ENCODE measurements at regions of chr5 and their contacts with region 1.

Region 1: DNA sequence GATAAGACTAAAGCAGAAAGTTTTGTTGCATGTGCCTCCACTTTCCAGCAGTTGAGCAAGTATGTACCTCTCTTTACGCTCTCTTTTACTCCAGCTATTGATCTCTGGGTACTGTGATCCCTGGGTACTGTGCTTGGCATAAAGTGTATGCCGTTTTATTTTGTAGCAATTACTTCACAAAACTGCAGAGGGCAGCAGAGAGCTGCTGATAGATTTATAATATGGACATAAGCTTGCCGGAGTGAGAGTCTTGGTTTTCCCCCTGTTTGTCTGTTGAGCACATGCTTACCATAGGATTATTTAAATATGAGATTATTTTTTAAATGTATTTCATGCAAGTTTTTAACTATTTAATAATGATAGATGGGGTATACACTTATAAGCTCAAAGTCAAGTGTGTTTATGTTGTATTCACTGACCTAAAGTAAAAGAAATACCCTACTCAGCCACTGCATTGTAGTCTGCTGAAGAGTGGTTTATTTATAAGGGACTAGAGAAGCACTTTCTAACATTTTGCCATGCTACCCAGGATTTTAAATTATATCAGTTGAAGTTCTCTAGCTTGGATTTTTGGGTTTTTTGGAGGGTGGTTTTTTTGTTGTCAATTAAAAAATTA is 13.0 kb downstream of the TTC1 start:
- DNase-seq: no peak
- ATAC-seq: peak; percentile 96
- H3K4me3 Mint-ChIP-seq: no peak overlapping the region
- H3K27ac Mint-ChIP-seq: peak overlapping the region; percentile 59
- H3K4me1 Mint-ChIP-seq: peaks cover 5% of the 10 kb centered on the region
- H3K27me3 Mint-ChIP-seq: no peaks in the 10 kb centered on the region
- CTCF ChIP-seq: no peak

Region 2: DNA sequence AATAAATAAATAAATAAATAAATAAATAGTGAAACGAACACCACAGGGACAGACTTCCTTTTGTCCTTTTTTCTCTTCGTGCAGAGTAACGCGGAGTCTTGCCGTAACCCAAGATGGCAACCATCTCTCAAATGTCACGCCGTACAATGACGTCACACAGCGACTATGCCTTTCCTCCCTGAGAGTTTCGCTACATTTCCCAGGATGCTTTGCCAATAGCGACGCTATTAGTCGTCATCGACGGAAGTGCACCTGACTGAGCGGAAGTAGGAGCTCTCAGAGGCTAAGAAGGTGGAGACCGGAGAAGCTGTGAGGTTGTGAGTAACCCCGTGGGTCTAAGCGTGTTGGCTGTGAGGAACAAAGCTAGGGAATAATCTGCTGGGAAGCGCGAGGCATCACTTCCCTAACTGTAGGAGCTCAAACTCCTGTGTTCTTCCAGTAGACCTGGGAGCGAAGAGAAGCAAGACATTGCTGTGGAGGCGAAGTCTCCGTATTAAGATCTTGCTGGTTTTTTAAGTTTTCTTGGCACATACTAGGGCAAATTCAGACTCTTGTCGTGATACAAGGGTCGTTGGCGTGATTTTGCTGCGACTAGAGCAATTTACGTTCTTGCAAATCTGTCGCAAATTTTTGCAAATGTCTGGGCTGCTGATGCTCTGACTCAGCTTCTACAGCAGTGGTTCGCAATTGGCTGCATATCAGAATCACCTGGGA is 12.9 kb before region 1 on chr5 and contains the start of gene TTC1:
- CTCF ChIA-PET with region 1: interaction called, 20 read pairs
- POLR2A ChIA-PET with region 1: interaction called, 8 read pairs
- intact Hi-C with region 1: loop called (anchors 1 kb)
- DNase-seq: peak; percentile 72
- ATAC-seq: peak; percentile 98
- H3K4me3 Mint-ChIP-seq: peak within 1 kb of the TSS; percentile 100
- H3K27ac Mint-ChIP-seq: peak within 1 kb of the TSS; percentile 98
- H3K4me1 Mint-ChIP-seq: peaks cover 31% of the 10 kb centered on the region
- H3K27me3 Mint-ChIP-seq: no peaks in the 10 kb centered on the region
- CTCF ChIP-seq: no peak
- total RNA-seq, gene TTC1: 59.9 and 65.0 TPM in 2 replicates

Region 3: DNA sequence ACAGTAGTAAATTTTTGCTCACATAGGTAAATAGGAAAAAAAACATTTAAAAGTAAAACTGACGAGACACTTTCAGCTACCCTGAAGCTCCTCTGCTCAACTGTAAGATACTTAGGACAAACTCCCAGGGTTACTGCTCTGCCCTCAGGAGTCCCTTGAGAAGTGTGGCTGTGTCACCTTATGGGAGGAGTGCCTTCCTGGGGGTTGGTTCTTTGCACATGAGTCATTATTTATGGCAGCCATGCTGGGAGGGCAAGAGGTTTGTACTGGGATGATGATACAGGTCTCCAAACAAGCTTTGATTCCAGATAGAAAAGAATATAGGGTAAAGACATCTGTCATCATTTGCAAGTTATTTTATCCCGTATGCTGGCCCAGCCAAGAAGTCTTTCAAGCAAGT is 32.9 kb after region 1 on chr5:
- CTCF ChIA-PET with region 1: no interaction called
- POLR2A ChIA-PET with region 1: interaction called, 14 read pairs
- intact Hi-C with region 1: no loop called
- DNase-seq: no peak
- ATAC-seq: no peak
- H3K4me3 Mint-ChIP-seq: no peak overlapping the region
- H3K27ac Mint-ChIP-seq: no peak overlapping the region
- H3K4me1 Mint-ChIP-seq: peaks cover 5% of the 10 kb centered on the region
- H3K27me3 Mint-ChIP-seq: no peaks in the 10 kb centered on the region
- CTCF ChIP-seq: no peak

Region 4: GRCh38 chr5:160199410-160199911 is 177.5 kb after region 1 on chr5:
- CTCF ChIA-PET with region 1: interaction called, 8 read pairs
- POLR2A ChIA-PET with region 1: no interaction called
- intact Hi-C with region 1: loop called (anchors 1 kb)
- DNase-seq: peak; percentile 78
- ATAC-seq: peak; percentile 96
- H3K4me3 Mint-ChIP-seq: peak overlapping the region; percentile 68
- H3K27ac Mint-ChIP-seq: no peak overlapping the region
- H3K4me1 Mint-ChIP-seq: peaks cover 6% of the 10 kb centered on the region
- H3K27me3 Mint-ChIP-seq: peaks cover 32% of the 10 kb centered on the region
- CTCF ChIP-seq: peak; percentile 55

Region 5: GRCh38 chr5:160342403-160342941 is 320.5 kb after region 1 on chr5:
- CTCF ChIA-PET with region 1: interaction called, 24 read pairs
- POLR2A ChIA-PET with region 1: no interaction called
- intact Hi-C with region 1: loop called (anchors 1 kb)
- DNase-seq: no peak
- ATAC-seq: no peak
- H3K4me3 Mint-ChIP-seq: no peak overlapping the region
- H3K27ac Mint-ChIP-seq: no peak overlapping the region
- H3K4me1 Mint-ChIP-seq: no peaks in the 10 kb centered on the region
- H3K27me3 Mint-ChIP-seq: no peaks in the 10 kb centered on the region
- CTCF ChIP-seq: no peak

Region 6: GRCh38 chr5:160390787-160391696 is 369.1 kb after region 1 on chr5:
- CTCF ChIA-PET with region 1: interaction called, 27 read pairs
- POLR2A ChIA-PET with region 1: no interaction called
- intact Hi-C with region 1: loop called (anchors 1 kb)
- DNase-seq: no peak
- ATAC-seq: no peak
- H3K4me3 Mint-ChIP-seq: no peak overlapping the region
- H3K27ac Mint-ChIP-seq: no peak overlapping the region
- H3K4me1 Mint-ChIP-seq: no peaks in the 10 kb centered on the region
- H3K27me3 Mint-ChIP-seq: no peaks in the 10 kb centered on the region
- CTCF ChIP-seq: no peak

Measured in activated B cell treated with CpG ODN at 0.5 μM for 24 hours (primary cell).